HEK293 (cell line): ENCODE measurements at regions of chr3 and their contacts with region 1.

Region 1: DNA sequence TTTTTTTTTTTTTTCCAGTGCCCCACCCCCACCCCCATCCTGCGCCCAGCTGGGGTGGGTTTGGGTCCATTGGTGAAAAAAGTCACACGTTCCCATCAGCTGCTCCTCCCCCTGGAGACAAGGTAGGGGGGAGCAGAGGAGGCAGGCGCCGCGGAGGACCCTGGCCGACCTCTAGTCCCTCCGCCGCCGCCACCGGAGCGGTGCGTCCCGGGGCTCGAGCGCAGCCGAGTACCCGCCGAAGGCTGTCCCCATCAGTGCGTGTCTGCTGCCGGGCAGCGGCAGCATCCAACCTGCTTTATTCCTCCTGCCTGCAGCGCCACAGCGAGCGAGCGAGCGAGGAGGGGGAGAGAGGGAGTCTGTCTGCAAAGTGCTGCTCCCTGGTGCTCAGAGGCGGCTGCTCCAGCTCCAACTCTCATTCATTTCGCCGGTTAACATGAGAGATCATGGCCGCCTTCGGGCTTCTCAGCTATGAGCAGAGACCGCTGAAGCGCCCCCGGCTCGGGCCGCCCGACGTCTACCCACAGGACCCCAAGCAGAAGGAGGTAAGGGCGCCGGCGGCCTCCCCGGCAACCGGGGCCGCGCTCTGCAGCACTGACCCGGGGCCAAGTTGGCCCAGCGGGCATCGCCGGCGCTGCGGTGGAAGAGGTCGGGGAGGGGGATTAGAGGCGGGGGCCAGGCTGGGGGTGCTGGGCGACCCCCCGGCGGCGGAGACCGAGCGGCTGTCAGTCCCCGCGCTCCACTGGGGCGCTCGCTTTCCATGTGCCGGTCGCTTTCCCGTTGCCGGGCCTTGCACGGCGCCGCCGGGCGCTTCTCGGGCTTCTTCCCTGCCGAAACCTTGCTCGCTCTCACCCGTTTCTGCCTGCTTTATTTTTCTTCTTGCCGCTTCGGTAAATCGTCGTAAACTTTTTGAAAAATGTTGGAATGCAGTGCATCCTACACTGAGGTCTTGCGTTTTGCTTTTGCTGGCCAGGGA is 1.3 kb downstream of the MED12L start:
- H3K4me3 ChIP-seq: peak overlapping the region; percentile 78
- H3K27ac ChIP-seq: peak overlapping the region; percentile 80; the same call in 1 of the 2 replicates
- H3K4me1 ChIP-seq: no peaks in the 10 kb centered on the region; the same call in 1 of the 2 replicates
- CTCF ChIP-seq: peak; percentile 93

Region 2: GRCh38 chr3:150703299-150704134 is 383.3 kb before region 1 on chr3 and contains the start of gene ERICH6:
- CTCF ChIA-PET with region 1: no interaction called
- POLR2A ChIA-PET with region 1: interaction called, 12 read pairs
- H3K4me3 ChIP-seq: peak within 1 kb of the TSS; percentile 62
- H3K27ac ChIP-seq: no peak within 1 kb of the TSS; the same call in 1 of the 2 replicates
- H3K4me1 ChIP-seq: no peaks in the 10 kb centered on the region
- CTCF ChIP-seq: no peak; the same call in 1 of the 2 replicates

Region 3: DNA sequence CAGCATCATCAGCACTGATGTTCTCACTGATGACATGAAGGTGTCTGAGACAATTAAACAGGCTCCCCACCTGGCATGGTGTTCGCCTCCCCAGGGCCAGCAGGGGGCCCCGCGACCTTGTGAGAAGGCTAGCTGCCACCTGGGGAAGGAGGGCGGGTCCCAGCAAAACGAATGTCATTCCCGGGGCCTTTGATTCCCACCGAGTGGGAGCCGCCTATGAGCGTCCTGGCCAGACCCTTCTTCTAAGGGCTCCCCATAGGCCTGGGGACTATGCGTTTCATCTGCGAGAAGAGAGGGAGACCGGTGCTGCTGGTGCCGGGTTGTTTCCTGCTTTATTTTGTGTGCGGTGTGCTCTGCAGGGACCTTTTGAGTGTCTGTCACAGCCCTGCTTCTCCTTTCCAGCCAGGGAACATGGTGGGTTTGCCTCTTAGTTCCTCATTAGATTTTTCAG is 161.0 kb before region 1 on chr3:
- CTCF ChIA-PET with region 1: interaction called, 16 read pairs
- POLR2A ChIA-PET with region 1: no interaction called
- H3K4me3 ChIP-seq: no peak overlapping the region
- H3K27ac ChIP-seq: no peak overlapping the region
- H3K4me1 ChIP-seq: no peaks in the 10 kb centered on the region
- CTCF ChIP-seq: peak; percentile 17; the same call in 1 of the 2 replicates

Region 4: GRCh38 chr3:151067158-151067557 is 19.6 kb before region 1 on chr3:
- CTCF ChIA-PET with region 1: interaction called, 19 read pairs
- POLR2A ChIA-PET with region 1: no interaction called
- H3K4me3 ChIP-seq: no peak overlapping the region
- H3K27ac ChIP-seq: no peak overlapping the region
- H3K4me1 ChIP-seq: no peaks in the 10 kb centered on the region
- CTCF ChIP-seq: no peak; the same call in 1 of the 2 replicates